MCF 10A (cell line): ENCODE measurements at regions of chr17 and their contacts with region 1.

Region 1: GRCh38 chr17:63834431-63835166 is 7.1 kb upstream of the FTSJ3 start:
- DNase-seq: peak; percentile 82
- H3K4me3 Mint-ChIP-seq: no peak overlapping the region
- H3K27ac Mint-ChIP-seq: no peak overlapping the region
- H3K4me1 Mint-ChIP-seq: peaks cover 15% of the 10 kb centered on the region
- H3K27me3 Mint-ChIP-seq: no peaks in the 10 kb centered on the region
- CTCF ChIP-seq: peak; percentile 74

Region 2: DNA sequence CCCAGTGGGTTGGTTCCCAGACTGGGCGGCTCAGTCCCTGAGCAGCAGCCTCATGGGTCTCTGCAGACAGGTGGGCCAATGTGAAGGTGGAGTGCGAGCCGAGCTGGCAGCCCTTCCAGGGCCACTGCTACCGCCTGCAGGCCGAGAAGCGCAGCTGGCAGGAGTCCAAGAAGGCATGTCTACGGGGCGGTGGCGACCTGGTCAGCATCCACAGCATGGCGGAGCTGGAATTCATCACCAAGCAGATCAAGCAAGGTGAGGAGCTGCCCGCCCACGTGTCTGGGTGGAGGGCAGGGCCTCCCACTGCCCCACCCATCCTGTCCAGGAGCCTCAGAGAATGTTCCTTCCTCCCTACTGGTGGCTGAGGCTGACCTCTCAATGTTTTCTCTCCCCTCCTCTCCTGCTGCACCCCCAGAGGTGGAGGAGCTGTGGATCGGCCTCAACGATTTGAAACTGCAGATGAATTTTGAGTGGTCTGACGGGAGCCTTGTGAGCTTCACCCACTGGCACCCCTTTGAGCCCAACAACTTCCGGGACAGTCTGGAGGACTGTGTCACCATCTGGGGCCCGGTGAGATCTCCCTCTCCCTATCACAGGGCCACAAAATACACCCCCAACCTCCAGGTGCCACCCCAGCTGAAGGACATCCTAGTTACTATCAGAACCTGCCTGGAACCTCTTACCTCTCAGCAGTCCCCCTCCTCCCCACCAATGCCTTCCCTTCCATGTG is 1162.9 kb before region 1 on chr17:
- CTCF ChIA-PET with region 1: no interaction called
- POLR2A ChIA-PET with region 1: no interaction called
- intact Hi-C with region 1: loop called (anchors 5 kb)
- DNase-seq: peak; percentile 85
- H3K4me3 Mint-ChIP-seq: peak overlapping the region; percentile 63
- H3K27ac Mint-ChIP-seq: peak overlapping the region; percentile 89
- H3K4me1 Mint-ChIP-seq: peaks cover 28% of the 10 kb centered on the region
- H3K27me3 Mint-ChIP-seq: no peaks in the 10 kb centered on the region
- CTCF ChIP-seq: no peak

Region 3: DNA sequence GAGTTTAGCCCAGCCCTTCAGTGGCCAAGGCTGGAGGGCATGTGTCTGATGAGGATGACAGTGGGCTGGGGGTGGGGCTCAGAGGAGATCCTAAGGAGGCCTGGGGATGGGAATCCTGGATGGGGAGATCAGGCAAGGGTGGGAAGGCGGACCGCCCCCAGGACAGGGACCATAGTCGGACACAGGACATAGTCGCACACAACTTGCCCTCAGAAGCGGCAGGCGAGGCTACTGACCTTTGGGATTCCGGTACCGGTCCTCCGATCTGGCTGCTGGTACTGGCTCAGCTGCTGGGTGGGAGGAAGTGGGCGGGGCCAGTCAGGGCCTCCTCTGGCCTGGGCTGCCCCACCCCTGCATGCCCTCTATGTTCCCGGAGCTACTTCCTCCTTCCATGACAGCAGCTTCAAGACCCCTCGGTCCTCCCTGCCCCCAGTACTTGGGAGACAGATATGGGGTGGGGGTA is 96.5 kb after region 1 on chr17:
- CTCF ChIA-PET with region 1: no interaction called
- POLR2A ChIA-PET with region 1: no interaction called
- intact Hi-C with region 1: no loop called
- DNase-seq: no peak
- H3K4me3 Mint-ChIP-seq: no peak overlapping the region
- H3K27ac Mint-ChIP-seq: no peak overlapping the region
- H3K4me1 Mint-ChIP-seq: no peaks in the 10 kb centered on the region
- H3K27me3 Mint-ChIP-seq: peaks cover 7% of the 10 kb centered on the region
- CTCF ChIP-seq: no peak

Region 4: DNA sequence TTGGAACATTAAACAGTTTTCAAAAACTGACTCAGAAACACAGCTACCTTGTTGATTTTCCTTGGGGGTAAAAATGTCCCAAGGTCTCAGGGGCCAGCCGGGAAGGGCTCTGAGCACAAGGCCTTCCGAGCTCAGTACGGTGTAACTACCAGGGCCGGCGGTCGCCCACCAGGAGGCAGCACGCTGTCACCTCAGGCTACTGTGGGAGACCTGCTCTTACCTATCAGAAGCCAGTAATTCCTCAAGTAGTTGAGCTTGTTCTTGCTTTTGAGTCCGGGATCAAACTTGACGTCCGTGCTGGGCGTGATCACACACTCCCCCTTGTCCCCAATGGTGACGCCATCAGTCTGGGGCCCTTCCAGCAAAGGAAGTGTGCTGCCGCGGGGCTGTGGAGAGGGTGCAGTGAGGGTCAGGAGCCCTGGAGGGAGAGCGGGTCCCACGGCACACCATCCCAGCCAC is 229.2 kb after region 1 on chr17:
- CTCF ChIA-PET with region 1: no interaction called
- POLR2A ChIA-PET with region 1: no interaction called
- intact Hi-C with region 1: no loop called
- DNase-seq: peak; percentile 46
- H3K4me3 Mint-ChIP-seq: no peak overlapping the region
- H3K27ac Mint-ChIP-seq: no peak overlapping the region
- H3K4me1 Mint-ChIP-seq: no peaks in the 10 kb centered on the region
- H3K27me3 Mint-ChIP-seq: no peaks in the 10 kb centered on the region
- CTCF ChIP-seq: peak; percentile 19